CD4-positive, alpha-beta memory T cell (primary cell): ENCODE measurements at regions of chr14 and their contacts with region 1.

Region 1: GRCh38 chr14:52961060-52961639 is 10.3 kb upstream of the FERMT2 start:
- DNase-seq: peak; percentile 61 to 69 (median 64)
- H3K4me3 ChIP-seq: no peak overlapping the region
- H3K4me3 Mint-ChIP-seq: peak overlapping the region in 6 of 8 donors; percentile 4 to 56 (median 20)
- H3K27ac ChIP-seq: no peak overlapping the region
- H3K27ac Mint-ChIP-seq: peak overlapping the region in 6 of 7 donors; percentile 25 to 86 (median 68)
- H3K4me1 ChIP-seq: peaks cover 5% of the 10 kb centered on the region
- H3K4me1 Mint-ChIP-seq: peaks cover 9 to 19% (median 15%) of the 10 kb centered on the region in 4 donors
- H3K27me3 ChIP-seq: no peaks in the 10 kb centered on the region
- H3K27me3 Mint-ChIP-seq: no peaks in the 10 kb centered on the region

Region 2: DNA sequence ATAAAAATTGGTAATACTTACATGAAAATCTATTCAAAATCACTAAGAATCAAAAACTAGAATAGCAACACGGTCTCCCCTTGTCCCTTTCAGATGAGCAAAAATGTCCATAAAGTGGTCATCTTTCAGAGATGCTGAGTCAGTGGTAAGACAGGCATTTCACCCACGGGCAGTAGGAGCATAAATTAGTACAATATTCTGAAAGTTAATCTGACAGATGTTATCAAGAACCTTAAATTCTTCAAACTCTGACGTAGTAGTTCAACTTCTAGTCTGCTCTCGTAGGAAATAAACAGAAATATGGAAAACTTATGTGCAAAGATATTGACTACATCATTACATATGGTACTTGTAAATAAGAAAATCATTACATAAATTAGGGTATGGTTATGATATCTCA is 136.6 kb before region 1 on chr14:
- CTCF ChIA-PET with region 1: interaction called, 215 read pairs
- POLR2A ChIA-PET with region 1: interaction called, 7 read pairs
- intact Hi-C with region 1: loop called (anchors 1 kb)
- DNase-seq: no peak
- H3K4me3 ChIP-seq: no peak overlapping the region
- H3K4me3 Mint-ChIP-seq: no peak overlapping the region
- H3K27ac ChIP-seq: no peak overlapping the region
- H3K27ac Mint-ChIP-seq: no peak overlapping the region
- H3K4me1 ChIP-seq: no peaks in the 10 kb centered on the region
- H3K4me1 Mint-ChIP-seq: peaks cover 0 to 7% (median 4%) of the 10 kb centered on the region in 4 donors
- H3K27me3 ChIP-seq: no peaks in the 10 kb centered on the region
- H3K27me3 Mint-ChIP-seq: peaks cover 1 to 3% of the 10 kb centered on the region in 2 donors

Region 3: DNA sequence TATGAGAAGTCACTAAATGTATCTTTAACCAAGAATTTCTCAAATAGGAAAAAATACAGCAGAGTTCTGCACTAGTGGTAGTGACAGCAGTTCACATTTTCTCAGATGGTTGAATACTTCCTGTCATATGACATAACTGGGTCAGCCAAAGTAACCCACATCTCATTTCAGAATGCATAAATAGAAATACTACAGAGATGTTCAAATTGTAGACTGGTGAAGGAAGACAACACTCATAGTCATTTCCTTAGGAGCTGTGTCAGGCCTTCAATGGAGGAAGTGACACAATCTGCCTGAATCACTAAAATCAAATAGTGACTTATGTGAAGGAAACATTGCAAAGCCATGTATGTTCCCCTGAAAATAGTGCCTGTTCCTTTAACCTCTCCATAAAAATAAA is 42.7 kb before region 1 on chr14:
- CTCF ChIA-PET with region 1: interaction called, 11 read pairs
- POLR2A ChIA-PET with region 1: interaction called, 4 read pairs
- intact Hi-C with region 1: loop called (anchors 1 kb)
- DNase-seq: peak; percentile 55 to 82 (median 75)
- H3K4me3 ChIP-seq: no peak overlapping the region
- H3K4me3 Mint-ChIP-seq: peak overlapping the region in 3 of 8 donors; percentile 13 to 48 (median 15)
- H3K27ac ChIP-seq: peak overlapping the region; percentile 57
- H3K27ac Mint-ChIP-seq: peak overlapping the region; percentile 88 to 95 (median 93)
- H3K4me1 ChIP-seq: peaks cover 24% of the 10 kb centered on the region
- H3K4me1 Mint-ChIP-seq: peaks cover 18 to 42% (median 26%) of the 10 kb centered on the region in 4 donors
- H3K27me3 ChIP-seq: no peaks in the 10 kb centered on the region
- H3K27me3 Mint-ChIP-seq: no peaks in the 10 kb centered on the region

Region 4: GRCh38 chr14:52950898-52951689 is 10.1 kb before region 1 on chr14 and contains the start of gene FERMT2:
- CTCF ChIA-PET with region 1: interaction called, 27 read pairs
- POLR2A ChIA-PET with region 1: no interaction called
- intact Hi-C with region 1: no loop called
- DNase-seq: peak in 4 of 5 donors; percentile 6 to 25 (median 11)
- H3K4me3 ChIP-seq: peak within 1 kb of the TSS; percentile 47 to 49
- H3K4me3 Mint-ChIP-seq: peak within 1 kb of the TSS; percentile 79 to 91 (median 85)
- H3K27ac ChIP-seq: no peak within 1 kb of the TSS
- H3K27ac Mint-ChIP-seq: peak within 1 kb of the TSS in 6 of 7 donors; percentile 5 to 65 (median 37)
- H3K4me1 ChIP-seq: peaks cover 20% of the 10 kb centered on the region
- H3K4me1 Mint-ChIP-seq: peaks cover 18 to 27% (median 21%) of the 10 kb centered on the region in 4 donors
- H3K27me3 ChIP-seq: peaks cover 45% of the 10 kb centered on the region
- H3K27me3 Mint-ChIP-seq: peaks cover 34 to 36% of the 10 kb centered on the region in 2 donors
- total RNA-seq, gene FERMT2: 0.75 to 0.79 TPM

Region 5: GRCh38 chr14:52974406-52974805 is 13.3 kb after region 1 on chr14:
- CTCF ChIA-PET with region 1: no interaction called
- POLR2A ChIA-PET with region 1: no interaction called
- intact Hi-C with region 1: no loop called
- DNase-seq: no peak
- H3K4me3 ChIP-seq: no peak overlapping the region
- H3K4me3 Mint-ChIP-seq: no peak overlapping the region
- H3K27ac ChIP-seq: no peak overlapping the region
- H3K27ac Mint-ChIP-seq: no peak overlapping the region
- H3K4me1 ChIP-seq: no peaks in the 10 kb centered on the region
- H3K4me1 Mint-ChIP-seq: no peaks in the 10 kb centered on the region
- H3K27me3 ChIP-seq: no peaks in the 10 kb centered on the region
- H3K27me3 Mint-ChIP-seq: peaks cover 10 to 19% of the 10 kb centered on the region in 2 donors

Region 6: DNA sequence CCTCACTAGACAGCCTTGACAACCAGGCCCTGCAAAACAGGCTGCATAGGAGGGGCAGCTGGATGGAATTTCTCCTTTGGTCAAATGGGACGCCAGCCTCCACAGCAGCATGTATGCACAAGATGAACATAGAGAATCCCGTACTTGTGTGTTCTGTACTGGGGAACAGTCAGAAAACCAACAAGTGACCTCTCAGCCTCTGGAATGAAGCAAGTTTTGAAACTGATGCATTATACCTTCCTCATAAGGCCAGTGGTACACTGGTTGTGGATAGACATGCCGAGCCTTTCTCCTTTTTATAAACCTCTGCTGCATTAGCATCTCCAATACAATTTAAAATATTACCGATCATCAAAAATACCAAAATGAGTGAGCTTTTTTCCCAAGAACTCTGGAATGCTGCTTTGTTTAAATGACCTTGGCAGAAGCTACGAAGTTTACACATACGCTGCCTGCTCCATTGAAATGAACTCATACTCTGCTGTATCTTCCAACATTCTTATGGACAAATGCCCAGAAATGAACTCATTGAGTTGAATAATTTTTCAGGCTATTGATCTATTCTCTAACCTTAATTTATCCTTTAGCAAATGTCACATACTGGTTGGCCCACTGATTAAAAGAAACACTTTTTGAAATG is 37.3 kb after region 1 on chr14:
- CTCF ChIA-PET with region 1: no interaction called
- POLR2A ChIA-PET with region 1: no interaction called
- intact Hi-C with region 1: no loop called
- DNase-seq: no peak
- H3K4me3 ChIP-seq: no peak overlapping the region
- H3K4me3 Mint-ChIP-seq: no peak overlapping the region
- H3K27ac ChIP-seq: no peak overlapping the region
- H3K27ac Mint-ChIP-seq: no peak overlapping the region
- H3K4me1 ChIP-seq: no peaks in the 10 kb centered on the region
- H3K4me1 Mint-ChIP-seq: no peaks in the 10 kb centered on the region
- H3K27me3 ChIP-seq: no peaks in the 10 kb centered on the region
- H3K27me3 Mint-ChIP-seq: peaks cover 5 to 12% of the 10 kb centered on the region in 2 donors

Region 7: GRCh38 chr14:53391151-53391550 is 430.0 kb after region 1 on chr14:
- CTCF ChIA-PET with region 1: no interaction called
- POLR2A ChIA-PET with region 1: no interaction called
- intact Hi-C with region 1: no loop called
- DNase-seq: no peak
- H3K4me3 ChIP-seq: no peak overlapping the region
- H3K4me3 Mint-ChIP-seq: no peak overlapping the region
- H3K27ac ChIP-seq: no peak overlapping the region
- H3K27ac Mint-ChIP-seq: no peak overlapping the region
- H3K4me1 ChIP-seq: no peaks in the 10 kb centered on the region
- H3K4me1 Mint-ChIP-seq: no peaks in the 10 kb centered on the region
- H3K27me3 ChIP-seq: no peaks in the 10 kb centered on the region
- H3K27me3 Mint-ChIP-seq: no peaks in the 10 kb centered on the region